GM13977 (cell line): ENCODE measurements at regions of chr1 and their contacts with region 1.

Region 1: DNA sequence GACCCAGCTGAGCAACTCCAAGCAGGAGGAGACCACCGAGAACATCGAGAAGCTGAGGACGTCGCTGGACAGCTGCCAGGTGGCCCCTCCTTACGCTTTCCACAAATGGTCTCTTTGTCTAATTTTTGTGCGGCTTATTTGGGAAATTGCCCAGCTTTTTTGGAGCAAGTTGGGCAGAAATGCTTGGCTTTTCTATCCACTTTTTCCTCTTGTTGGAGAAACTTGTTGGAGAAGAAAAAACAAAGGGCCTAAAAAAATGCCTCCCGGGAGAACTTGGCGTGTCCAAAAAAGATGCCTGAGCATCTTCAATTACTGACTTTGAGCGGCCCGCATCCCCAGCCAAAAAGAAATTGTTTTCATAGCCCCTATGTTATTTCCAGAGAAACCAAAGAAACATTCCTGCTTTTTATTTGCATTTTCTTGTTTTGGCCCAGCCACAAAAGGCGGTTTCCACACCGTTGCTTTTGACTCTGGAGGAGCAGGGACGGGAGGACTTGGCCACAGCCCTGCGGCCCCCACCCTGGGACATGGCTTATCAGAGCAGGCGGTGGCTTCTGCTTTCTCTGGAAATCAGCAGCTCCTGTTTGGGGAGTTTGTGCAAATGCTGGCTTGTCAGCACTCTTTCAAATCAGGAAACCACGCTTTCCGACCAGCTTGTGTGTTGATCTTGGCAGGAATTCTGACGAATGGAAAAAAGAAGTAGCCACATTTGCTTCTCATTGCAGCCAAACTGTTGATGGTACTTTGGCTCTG is 81.2 kb upstream of the EFHD2 start:
- DNase-seq: no peak
- CTCF ChIP-seq: no peak

Region 2: DNA sequence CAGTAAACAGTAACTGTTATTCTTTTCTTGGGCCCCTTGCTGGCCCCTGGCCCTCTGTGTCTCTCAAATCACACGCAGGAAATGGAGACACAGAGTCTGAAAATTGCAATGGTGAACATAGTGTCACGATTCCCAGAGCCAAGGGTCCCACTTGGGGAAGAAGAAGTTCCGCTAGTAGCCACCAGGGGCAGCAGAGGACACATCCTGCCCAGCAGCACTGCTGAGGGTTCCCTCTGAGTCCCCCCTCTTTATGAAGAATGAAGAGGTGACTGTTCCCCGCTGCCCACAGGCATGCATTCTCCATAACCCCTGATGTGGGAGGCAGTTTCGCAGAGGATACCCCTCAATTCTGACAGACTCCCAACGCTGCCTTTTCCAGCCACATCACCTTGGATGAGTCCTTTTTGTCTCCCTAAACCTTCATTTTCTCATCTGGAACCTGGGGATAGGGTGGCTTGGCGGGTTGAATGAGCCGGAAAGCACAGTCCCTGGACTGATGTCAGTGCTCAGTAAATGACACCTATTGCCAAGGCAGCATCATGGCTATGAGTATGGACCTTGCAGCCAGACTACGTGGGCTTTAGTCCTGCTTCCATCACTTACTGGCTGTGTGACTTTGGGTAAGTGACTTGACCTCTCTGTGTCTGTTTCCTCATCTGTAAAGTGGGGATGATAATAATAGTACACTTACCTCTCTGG is 413.0 kb before region 1 on chr1:
- in situ Hi-C with region 1: no loop called
- DNase-seq: peak; percentile 64
- CTCF ChIP-seq: peak; percentile 70

Region 3: DNA sequence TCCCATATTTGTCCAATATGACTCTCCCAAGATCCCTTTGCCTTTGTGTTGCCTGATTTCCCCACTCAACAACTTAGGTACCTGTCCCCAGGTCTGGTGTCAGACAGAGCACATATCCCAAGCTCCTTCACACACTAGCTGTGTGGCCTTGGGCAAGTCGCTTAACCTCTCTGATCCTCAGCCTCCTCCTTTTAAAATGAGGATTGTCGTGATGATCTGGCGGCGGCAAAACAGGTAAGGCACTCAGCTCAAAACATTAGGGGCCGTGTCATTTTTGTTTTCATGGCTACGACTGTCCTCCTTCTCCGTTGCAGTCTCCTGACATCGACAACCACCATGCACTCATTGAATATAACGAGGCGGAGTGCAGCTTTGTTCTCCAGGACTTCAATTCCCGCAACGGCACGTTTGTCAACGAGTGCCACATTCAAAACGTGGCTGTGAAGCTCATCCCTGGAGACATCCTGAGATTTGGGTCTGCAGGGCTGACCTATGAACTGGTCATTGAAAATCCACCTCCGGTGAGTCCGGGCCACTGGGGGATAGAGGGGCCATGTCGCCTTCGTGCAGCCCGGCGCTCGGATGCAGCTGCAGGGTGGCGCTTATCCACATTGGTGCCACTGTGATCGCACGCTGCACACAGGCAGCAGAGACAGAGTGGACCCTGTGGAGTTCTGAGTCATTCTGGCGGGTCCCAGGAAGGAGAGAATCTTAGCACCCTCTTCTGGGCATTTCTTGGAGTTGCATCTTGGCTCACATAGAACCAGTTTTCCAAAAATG is 56.3 kb before region 1 on chr1:
- in situ Hi-C with region 1: no loop called
- DNase-seq: peak; percentile 77
- CTCF ChIP-seq: peak; percentile 70

Region 4: DNA sequence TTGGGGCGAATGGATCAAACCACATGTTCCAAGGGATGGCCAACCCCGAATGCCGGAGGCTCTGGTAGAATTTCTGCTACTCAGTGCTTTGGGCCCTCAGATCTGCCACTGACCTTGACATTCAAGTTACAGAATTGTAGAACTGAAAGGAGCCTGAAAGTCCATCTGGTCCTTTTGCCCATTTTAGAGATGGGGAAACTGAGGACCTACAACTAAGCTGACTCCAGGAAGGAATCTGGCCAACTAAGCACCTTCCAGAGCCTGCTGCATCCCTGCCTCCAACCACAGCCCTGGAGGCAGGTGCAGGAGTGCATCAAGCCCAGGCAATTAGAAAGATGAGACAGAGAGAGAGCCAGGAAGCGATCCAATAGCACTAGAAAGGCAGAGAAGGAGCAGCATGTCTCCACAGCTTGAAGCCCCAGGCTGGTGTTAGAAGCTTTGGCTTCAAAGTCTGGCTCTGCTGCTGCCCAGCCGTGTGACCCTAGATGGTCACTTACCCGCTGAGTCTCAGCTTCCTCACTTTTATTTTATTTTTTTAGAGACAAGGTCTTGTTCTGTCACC is 108.4 kb after region 1 on chr1:
- in situ Hi-C with region 1: loop called (anchors 5 kb)
- DNase-seq: no peak
- CTCF ChIP-seq: no peak